H1 (cell line): ENCODE measurements at regions of chr9 and their contacts with region 1.

Region 1: DNA sequence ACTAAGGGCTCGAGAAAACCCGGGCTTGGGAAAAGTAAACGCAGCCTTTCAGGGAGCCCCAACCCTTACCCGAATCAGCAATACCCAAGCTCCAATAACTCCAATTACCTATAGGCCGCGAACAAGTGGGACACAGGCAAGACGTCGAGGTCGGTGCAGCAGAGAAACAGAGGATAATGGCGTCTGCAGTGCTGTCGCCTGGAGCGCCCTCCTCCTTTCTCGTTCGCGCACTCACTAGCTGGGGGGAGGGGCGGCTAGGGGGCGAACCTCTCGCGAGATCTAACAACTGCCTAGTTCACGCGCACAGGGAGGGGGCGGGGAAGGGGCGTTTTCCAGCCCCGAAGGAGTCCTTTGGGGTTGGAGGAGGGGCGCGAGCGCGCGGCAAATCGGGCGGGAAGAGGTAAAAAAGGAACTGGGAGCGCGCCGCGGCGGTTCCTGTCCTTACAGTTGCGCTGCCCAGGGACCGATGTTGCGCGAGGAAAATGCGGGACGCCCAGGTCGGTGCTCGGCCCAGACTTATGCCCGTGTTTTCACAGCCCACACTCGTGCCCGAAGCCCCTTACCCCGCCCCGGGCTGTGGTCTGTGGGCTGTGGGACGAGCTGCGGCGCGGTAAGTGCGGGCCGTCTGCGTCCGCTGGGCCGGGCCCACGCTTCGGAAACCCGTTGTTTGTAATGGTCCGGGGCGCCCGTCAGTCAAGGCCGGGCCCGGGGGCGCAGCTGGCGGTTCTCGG is at the start of gene RMI1:
- DNase-seq: peak; percentile 94 to 95
- H3K4me3 ChIP-seq: peak within 1 kb of the TSS; percentile 74 to 99 (median 97)
- H3K27ac ChIP-seq: peak within 1 kb of the TSS; percentile 100
- H3K4me1 ChIP-seq: peaks cover 0 to 2% (median 0%) of the 10 kb centered on the region in 4 experiments; a peak in 2 of 7 replicates
- H3K27me3 ChIP-seq: no peaks in the 10 kb centered on the region
- CTCF ChIP-seq: no peak
- EP300 ChIP-seq: peak in 1 of 2 experiments; percentile 58; a peak in 1 of 3 replicates
- POLR2A ChIP-seq: peak; percentile 75 to 94
- RAD21 ChIP-seq: peak in 1 of 2 experiments; percentile 11; a peak in 1 of 4 replicates
- total RNA-seq, gene RMI1: 34.1 and 34.6 TPM in 2 replicates

Region 2: DNA sequence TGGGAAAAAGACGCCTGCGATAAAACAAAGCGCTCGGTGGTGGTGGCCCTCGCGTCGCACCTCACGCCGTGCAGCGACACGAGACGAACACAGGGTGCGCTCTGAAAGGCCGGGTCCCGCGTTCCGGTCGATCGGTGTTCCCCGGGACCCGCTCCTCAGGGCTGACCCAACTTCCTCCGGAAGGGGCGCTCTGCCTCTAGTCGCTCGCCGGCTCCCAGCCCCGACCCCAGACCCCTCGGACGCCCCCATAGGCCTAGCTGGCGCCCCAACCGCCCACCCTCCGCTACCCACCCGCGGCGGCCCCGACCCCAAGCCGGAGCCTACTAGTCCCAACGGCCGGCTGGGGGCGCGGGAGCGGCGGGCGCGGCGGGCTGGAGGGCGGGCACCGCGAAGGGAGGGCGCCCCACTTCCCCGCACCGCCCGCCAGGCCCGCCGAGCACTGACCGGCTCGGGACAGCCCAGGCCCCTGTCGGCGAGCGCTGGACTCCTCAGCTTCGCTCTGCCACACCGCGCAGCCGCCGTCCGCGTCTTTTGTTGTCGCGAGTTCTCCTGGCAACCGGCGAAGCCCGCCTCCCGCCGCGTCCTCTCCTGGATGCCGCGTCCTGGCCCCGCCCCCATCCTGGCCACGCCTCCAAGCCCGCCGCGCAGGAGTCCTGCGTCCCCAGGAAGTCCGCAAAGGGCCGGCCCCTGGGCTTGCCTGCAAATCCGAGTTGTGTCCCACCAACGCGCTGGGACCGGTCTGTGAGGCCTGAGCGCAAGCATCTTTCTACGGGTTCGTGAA is 59.4 kb before region 1 on chr9 and contains the start of gene KIF27:
- CTCF ChIA-PET with region 1: no interaction called
- POLR2A ChIA-PET with region 1: interaction called, 43 read pairs
- DNase-seq: peak; percentile 93 to 100
- H3K4me3 ChIP-seq: peak within 1 kb of the TSS; percentile 35 to 62 (median 47)
- H3K27ac ChIP-seq: peak within 1 kb of the TSS; percentile 81
- H3K4me1 ChIP-seq: peaks cover 0 to 2% (median 0%) of the 10 kb centered on the region in 4 experiments; a peak in 2 of 7 replicates
- H3K27me3 ChIP-seq: no peaks in the 10 kb centered on the region
- CTCF ChIP-seq: peak; percentile 23 to 48 (median 48)
- EP300 ChIP-seq: no peak
- POLR2A ChIP-seq: peak; percentile 96 to 99
- RAD21 ChIP-seq: no peak; a peak in 1 of 4 replicates
- total RNA-seq, gene KIF27: 4.6 and 7.0 TPM in 2 replicates

Region 3: DNA sequence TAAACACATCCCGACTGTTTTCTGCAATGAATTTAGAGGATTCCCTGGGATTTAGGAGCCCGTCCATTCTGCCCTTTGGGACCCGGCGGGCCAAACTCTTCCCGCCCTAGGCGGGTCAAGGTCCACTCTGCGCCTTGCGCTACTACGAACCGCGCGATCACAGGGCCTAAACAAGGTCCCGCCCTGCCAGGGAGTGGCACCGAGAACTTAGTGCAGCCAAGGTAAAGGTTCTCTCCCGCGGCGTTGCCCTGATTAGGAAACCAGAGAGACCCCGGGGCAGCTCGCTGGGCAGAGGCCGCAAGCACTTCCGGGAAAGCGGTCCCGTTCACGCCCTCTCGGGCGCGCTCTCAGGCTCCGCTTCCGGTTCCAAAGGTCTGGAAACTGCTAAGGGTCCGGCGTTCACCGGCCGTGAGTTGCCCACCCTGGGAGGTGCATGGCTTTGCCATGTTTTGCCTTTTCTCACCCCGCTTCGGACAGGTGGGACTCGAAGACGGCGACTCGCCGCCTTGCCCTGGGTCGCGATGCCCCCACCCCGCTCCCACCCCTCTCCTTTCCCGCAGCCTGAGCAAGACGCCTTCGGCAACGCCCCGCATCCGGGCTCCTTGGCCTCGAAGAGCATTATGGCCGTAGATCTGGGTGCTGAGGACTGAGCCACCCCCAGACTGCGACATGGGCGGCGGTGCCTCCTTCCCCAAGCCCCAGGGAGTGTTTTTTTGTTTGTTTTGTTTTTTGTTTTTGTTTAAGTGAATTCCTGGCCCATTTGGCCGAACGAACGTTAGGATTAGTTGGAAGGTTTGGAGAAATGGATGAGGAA is 23.9 kb before region 1 on chr9:
- CTCF ChIA-PET with region 1: no interaction called
- POLR2A ChIA-PET with region 1: interaction called, 269 read pairs
- DNase-seq: no peak
- H3K4me3 ChIP-seq: peak overlapping the region; percentile 13 to 50 (median 24); a peak in 6 of 8 replicates
- H3K27ac ChIP-seq: no peak overlapping the region
- H3K4me1 ChIP-seq: no peaks in the 10 kb centered on the region
- H3K27me3 ChIP-seq: no peaks in the 10 kb centered on the region
- CTCF ChIP-seq: no peak
- EP300 ChIP-seq: no peak
- POLR2A ChIP-seq: no peak
- RAD21 ChIP-seq: no peak; a peak in 1 of 4 replicates

Region 4: DNA sequence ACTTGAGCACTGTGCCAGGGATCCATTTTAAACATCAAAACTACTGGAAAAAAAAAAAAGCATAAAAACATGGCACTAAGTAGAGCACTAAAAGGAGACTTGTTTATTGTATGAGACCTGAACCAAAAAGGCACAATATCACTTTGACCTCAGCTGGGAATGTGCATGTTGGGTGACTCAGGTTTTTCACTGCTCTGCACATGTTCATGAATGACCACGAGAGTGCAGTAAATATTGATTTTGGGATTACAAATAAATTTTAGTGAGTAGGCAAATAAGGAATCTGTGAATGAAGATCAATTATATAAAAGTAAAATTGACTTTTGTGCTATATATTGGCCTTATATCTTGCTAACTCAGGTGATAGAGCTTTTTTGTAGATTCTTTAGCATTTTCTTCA is 11.9 kb after region 1 on chr9:
- CTCF ChIA-PET with region 1: no interaction called
- POLR2A ChIA-PET with region 1: interaction called, 18 read pairs
- DNase-seq: no peak
- H3K4me3 ChIP-seq: no peak overlapping the region
- H3K27ac ChIP-seq: no peak overlapping the region
- H3K4me1 ChIP-seq: no peaks in the 10 kb centered on the region
- H3K27me3 ChIP-seq: no peaks in the 10 kb centered on the region
- CTCF ChIP-seq: no peak
- EP300 ChIP-seq: no peak
- POLR2A ChIP-seq: no peak
- RAD21 ChIP-seq: no peak

Region 5: GRCh38 chr9:84261082-84261746 is 280.7 kb after region 1 on chr9:
- CTCF ChIA-PET with region 1: interaction called, 8 read pairs
- POLR2A ChIA-PET with region 1: interaction called, 19 read pairs
- DNase-seq: peak; percentile 73 to 83
- H3K4me3 ChIP-seq: no peak overlapping the region
- H3K27ac ChIP-seq: no peak overlapping the region
- H3K4me1 ChIP-seq: no peaks in the 10 kb centered on the region; a peak in 2 of 7 replicates
- H3K27me3 ChIP-seq: no peaks in the 10 kb centered on the region
- CTCF ChIP-seq: peak; percentile 92 to 96 (median 95)
- EP300 ChIP-seq: no peak
- POLR2A ChIP-seq: no peak
- RAD21 ChIP-seq: peak; percentile 98